ENCODE measurements at regions of chr5 and their contacts with region 1.

Region 1: DNA sequence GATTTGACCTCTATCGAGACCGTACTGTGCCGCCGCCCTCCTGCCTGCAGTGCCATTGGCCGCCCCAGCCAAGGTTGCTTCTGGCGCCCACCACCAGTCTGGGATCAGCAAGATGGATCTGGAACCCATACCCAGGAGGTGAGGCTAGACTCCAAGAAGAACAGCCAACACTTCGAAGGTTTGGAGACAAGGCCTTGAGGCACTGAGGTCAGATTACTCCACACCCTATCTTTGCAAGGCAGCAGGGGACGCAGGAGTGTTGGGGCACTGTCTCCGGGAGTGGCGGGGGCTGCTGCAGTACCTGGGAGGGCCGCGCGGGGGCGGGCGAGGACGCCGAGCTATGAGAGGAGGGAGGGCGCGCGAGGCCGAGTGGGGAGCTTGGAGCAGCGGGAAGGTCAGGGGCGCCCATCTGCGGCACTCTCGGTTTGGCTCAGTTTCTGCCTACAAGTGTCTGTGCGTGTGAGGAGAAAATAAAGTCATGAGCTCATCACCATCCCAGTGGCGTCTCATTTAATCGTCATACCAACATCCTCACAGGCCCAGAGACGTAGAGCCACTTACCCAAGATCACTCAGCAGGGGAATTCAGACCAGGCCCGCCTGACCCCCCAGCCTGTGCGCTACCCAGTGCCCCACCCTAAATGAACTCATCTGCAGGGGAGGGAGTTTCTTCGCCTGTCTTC is 20.5 kb upstream of the PSD2 start:
- DNase-seq: no peak
- H3K4me3 ChIP-seq: no peak overlapping the region
- CTCF ChIP-seq: peak; percentile 92

Region 2: DNA sequence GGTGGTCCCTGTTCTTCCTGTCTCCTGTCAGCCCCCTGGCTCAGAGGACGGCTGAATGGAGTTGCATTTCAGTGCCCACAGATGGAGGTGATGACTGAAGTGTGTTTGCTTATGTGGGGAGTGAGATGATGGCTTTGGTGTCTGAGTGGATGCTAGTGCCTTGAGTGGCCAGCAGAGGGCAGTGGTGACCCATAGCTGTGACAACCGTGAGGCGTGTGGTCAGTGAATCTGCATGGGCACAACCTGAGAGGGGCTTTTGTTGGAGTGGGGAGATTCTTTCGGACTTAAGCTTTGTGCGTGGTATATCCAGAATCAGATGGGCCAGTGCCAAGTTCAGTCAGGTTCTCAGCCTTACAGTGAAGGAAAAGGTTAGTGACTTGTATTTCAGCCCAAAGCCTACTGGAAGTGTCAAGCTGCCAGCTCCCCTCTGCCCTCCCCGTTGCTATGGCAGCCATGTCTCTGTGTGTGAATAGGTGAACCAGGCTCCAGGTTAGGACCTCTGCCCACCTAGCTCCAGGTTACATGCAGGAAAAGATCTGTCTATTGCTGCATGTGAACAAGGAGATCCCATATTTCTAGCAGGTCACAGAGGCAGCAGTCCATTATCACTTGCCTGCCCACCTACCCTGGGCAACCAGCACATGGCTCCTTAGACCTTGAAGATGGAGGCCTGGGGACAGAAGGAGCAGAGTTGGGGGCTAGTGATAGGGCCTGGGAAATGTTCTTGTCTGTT is 141.7 kb before region 1 on chr5:
- in situ Hi-C with region 1: loop called (anchors 5 kb)
- DNase-seq: peak; percentile 62
- H3K4me3 ChIP-seq: no peak overlapping the region
- CTCF ChIP-seq: peak; percentile 98

Region 3: DNA sequence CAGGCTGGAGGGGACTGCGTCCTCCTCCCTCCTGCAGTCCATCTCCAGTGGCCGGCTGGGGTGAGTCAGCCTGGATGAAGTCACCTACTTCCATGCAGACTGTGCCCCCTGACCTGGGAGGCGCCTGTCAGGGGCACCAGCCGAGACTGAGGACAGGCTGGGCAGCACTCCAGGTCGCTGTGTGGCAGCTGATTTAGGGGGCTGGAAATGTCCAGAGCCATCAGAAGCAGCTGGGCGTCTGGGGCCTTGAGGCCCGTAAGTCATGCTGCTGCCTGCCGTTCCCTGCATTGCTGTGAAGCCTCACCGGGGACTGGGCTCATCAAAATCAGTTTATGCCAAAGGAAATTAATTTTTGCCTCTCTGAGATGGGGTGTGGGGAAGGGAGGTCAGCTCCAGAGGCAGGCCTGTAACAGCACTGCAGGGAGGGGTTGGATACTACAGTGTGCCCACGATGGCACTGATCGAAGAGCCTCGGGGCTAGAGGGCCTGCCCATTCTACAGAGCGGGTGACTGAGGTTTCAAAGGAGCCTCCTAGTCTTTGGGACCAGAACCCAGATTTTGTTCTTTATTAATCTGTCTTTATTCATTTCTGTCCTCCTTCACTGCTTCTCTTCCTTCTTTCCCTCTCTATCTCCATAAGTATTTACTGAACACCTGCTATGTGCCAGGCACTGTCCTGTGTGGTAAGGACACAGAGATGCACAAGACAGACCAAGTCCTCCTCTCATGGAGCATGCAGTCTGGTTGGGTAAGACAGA is 49.9 kb before region 1 on chr5:
- in situ Hi-C with region 1: no loop called
- DNase-seq: no peak
- H3K4me3 ChIP-seq: no peak overlapping the region
- CTCF ChIP-seq: no peak

Measured in astrocyte of the cerebellum (primary cell).